Lower leg skin (tissue), 4 donors: ENCODE measurements at regions of chr11 and their contacts with region 1.

Region 1: GRCh38 chr11:129331871-129332274 is 43.8 kb upstream of the BARX2 start:
- DNase-seq: peak; percentile 83 to 95
- H3K4me3 ChIP-seq: no peak overlapping the region
- CTCF ChIP-seq: peak in 1 of 3 donors; percentile 84
- POLR2A ChIP-seq: no peak

Region 2: DNA sequence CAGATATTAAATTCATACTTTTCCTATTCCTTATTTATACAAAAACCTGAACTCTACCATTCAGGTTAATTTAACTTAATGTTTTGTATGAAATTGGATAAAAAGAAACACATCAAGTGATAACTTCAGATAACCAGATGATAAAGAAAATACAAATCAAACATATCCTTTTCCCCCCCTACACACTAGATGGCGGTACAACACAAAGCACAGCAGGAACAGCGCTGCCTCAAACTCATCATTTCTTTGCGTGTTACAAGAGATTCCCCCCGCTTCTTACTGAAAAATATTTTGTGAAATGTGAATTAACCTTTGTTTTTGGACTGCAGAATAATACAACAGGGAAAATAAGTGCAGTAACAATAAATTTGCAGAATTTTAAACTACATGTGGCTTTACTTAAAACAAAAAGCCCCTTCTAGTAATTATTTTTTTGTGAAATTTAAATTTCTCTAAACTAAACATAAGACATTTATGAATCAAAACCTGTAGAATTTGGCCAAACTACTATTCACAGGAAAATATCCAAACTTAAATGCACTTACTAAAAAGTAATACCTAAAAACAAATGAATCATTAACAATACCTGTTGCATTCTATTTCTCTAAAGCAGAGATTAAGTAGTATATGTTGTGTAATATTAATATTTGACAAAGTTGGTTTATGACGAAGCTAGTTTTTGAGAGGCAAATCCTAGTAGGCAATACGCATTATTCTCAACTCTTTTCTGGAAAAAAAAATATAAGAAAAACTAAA is 214.1 kb before region 1 on chr11:
- intact Hi-C with region 1: loop called (anchors 5 kb)
- DNase-seq: peak in 1 of 2 donors; percentile 28
- H3K4me3 ChIP-seq: no peak overlapping the region
- CTCF ChIP-seq: peak in 1 of 3 donors; percentile 40
- POLR2A ChIP-seq: no peak

Region 3: GRCh38 chr11:129346916-129347315 is 15.0 kb after region 1 on chr11:
- intact Hi-C with region 1: no loop called
- DNase-seq: no peak
- H3K4me3 ChIP-seq: no peak overlapping the region
- CTCF ChIP-seq: no peak
- POLR2A ChIP-seq: no peak